CD8-positive, alpha-beta T cell (primary cell): ENCODE measurements at regions of chr18 and their contacts with region 1.

Region 1: GRCh38 chr18:30562231-30562630 is 480.3 kb downstream of the DSC3 start:
- DNase-seq: no peak
- ATAC-seq: no peak
- H3K4me3 ChIP-seq: no peak overlapping the region
- H3K4me3 Mint-ChIP-seq: no peak overlapping the region
- H3K27ac ChIP-seq: no peak overlapping the region
- H3K27ac Mint-ChIP-seq: no peak overlapping the region
- H3K4me1 ChIP-seq: no peaks in the 10 kb centered on the region
- H3K4me1 Mint-ChIP-seq: no peaks in the 10 kb centered on the region
- H3K27me3 ChIP-seq: no peaks in the 10 kb centered on the region
- H3K27me3 Mint-ChIP-seq: no peaks in the 10 kb centered on the region
- CTCF ChIP-seq: no peak

Region 2: GRCh38 chr18:30501594-30501993 is 60.6 kb before region 1 on chr18:
- CTCF ChIA-PET with region 1: no interaction called
- POLR2A ChIA-PET with region 1: no interaction called
- intact Hi-C with region 1: loop called in 1 of 2 experiments (anchors 10 kb)
- DNase-seq: no peak
- ATAC-seq: no peak
- H3K4me3 ChIP-seq: no peak overlapping the region
- H3K4me3 Mint-ChIP-seq: no peak overlapping the region
- H3K27ac ChIP-seq: no peak overlapping the region
- H3K27ac Mint-ChIP-seq: no peak overlapping the region
- H3K4me1 ChIP-seq: no peaks in the 10 kb centered on the region
- H3K4me1 Mint-ChIP-seq: no peaks in the 10 kb centered on the region
- H3K27me3 ChIP-seq: no peaks in the 10 kb centered on the region
- H3K27me3 Mint-ChIP-seq: no peaks in the 10 kb centered on the region
- CTCF ChIP-seq: no peak